PC-3 (cell line): ENCODE measurements at regions of chr12 and their contacts with region 1.

Region 1: GRCh38 chr12:6533923-6534694 is at the start of gene GAPDH:
- DNase-seq: peak; percentile 92
- ATAC-seq: peak; percentile 48
- H3K4me3 ChIP-seq: peak within 1 kb of the TSS; percentile 97
- H3K27ac ChIP-seq: peak within 1 kb of the TSS; percentile 99
- H3K4me1 ChIP-seq: peaks cover 38% of the 10 kb centered on the region
- H3K27me3 ChIP-seq: no peaks in the 10 kb centered on the region
- CTCF ChIP-seq: no peak
- total RNA-seq, gene GAPDH: 6,976 and 7,326 TPM in 2 replicates

Region 2: GRCh38 chr12:6215932-6216494 is 318.1 kb before region 1 on chr12:
- CTCF ChIA-PET with region 1: no interaction called
- POLR2A ChIA-PET with region 1: interaction called, 26 read pairs
- intact Hi-C with region 1: no loop called
- DNase-seq: peak; percentile 96
- ATAC-seq: peak; percentile 89
- H3K4me3 ChIP-seq: peak overlapping the region; percentile 30; the same call in 1 of the 2 replicates
- H3K27ac ChIP-seq: peak overlapping the region; percentile 99
- H3K4me1 ChIP-seq: peaks cover 72% of the 10 kb centered on the region
- H3K27me3 ChIP-seq: no peaks in the 10 kb centered on the region
- CTCF ChIP-seq: no peak

Region 3: DNA sequence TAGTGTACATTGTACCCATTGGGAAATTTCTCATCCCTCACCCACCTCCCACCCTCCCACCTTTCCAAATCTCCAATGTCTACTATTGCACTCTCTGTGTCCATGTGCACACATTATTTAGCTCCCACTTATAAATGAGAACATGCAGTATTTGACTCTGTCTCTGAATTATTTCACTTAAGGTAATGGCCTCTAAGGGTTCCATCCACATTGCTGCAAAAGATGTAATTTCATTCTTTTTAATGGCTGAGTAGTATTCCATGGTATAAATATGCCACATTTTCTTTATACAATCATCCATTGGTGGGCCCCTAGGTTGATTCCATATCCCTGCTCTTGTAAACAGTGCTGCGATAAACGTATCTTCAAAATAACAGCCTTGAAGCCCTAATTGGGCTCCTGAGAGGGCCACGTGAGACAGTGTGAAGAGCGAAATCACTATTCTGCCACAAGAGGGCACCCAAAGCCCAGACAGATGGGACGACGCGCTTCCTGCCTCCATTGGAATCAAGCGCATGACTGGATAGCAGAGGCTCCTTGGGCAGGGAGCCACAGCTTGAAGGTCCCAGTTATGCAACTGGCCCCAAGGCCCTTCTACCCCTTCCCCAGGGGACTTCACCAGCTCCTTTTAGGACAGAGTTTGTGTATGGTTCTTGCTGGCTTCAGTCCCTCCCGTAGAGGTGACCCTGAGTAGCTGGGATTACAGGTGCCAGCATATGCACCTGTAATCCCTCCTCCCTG is 110.7 kb before region 1 on chr12:
- CTCF ChIA-PET with region 1: no interaction called
- POLR2A ChIA-PET with region 1: no interaction called
- intact Hi-C with region 1: loop called (anchors 5 kb)
- DNase-seq: peak; percentile 84
- ATAC-seq: peak; percentile 95
- H3K4me3 ChIP-seq: no peak overlapping the region
- H3K27ac ChIP-seq: no peak overlapping the region
- H3K4me1 ChIP-seq: peaks cover 9% of the 10 kb centered on the region
- H3K27me3 ChIP-seq: no peaks in the 10 kb centered on the region
- CTCF ChIP-seq: peak; percentile 77

Region 4: DNA sequence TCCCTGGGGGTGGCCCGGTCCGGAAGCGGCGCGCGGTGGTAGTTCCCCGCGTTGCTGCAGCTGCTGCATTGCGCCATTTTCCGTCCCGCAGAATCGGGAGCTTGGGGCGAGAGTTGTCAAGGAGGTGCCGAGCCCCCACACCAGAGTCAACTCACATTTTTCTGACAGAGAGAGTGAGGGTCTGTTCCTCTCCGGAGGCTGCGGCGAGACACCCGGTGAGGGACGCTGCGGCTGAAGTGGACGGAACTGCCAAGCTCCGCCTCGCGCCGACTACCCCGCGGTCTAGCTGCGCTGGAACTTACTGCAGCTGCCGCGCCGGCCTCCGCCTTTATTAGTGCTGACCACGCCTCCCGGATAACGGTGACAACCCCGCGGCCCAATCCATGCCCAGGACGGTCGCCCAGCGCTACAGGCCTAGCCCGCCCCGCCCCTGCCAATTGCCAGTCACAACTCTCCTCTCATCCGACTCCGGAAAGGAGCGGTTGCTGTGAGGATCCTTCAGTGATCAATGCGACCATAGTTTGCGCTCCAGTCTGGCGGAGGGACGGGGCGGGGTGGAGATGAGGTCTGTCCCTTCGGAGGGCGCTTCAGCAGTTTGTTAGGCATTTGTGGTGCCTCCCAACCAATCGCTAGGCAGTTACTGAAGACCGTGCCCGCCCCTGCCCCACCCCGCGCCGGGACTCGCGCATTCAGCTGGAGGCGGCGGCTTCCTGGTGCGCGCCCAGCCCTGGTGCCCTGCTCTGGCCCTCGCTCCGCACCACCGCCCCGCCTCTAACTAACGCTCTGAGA is 63.5 kb before region 1 on chr12 and contains the start of gene VAMP1:
- CTCF ChIA-PET with region 1: interaction called, 4 read pairs
- POLR2A ChIA-PET with region 1: interaction called, 28 read pairs
- intact Hi-C with region 1: loop called (anchors 1 kb)
- DNase-seq: peak; percentile 87
- ATAC-seq: peak; percentile 92
- H3K4me3 ChIP-seq: peak within 1 kb of the TSS; percentile 96
- H3K27ac ChIP-seq: peak within 1 kb of the TSS; percentile 41
- H3K4me1 ChIP-seq: peaks cover 25% of the 10 kb centered on the region
- H3K27me3 ChIP-seq: no peaks in the 10 kb centered on the region
- CTCF ChIP-seq: no peak
- total RNA-seq, gene VAMP1: 9.3 and 13.9 TPM in 2 replicates

Region 5: GRCh38 chr12:6493497-6494257 is 40.4 kb before region 1 on chr12 and contains the start of gene NCAPD2:
- CTCF ChIA-PET with region 1: no interaction called
- POLR2A ChIA-PET with region 1: interaction called, 6 read pairs
- intact Hi-C with region 1: loop called (anchors 2 kb)
- DNase-seq: peak; percentile 94
- ATAC-seq: peak; percentile 93
- H3K4me3 ChIP-seq: peak within 1 kb of the TSS; percentile 80
- H3K27ac ChIP-seq: peak within 1 kb of the TSS; percentile 91
- H3K4me1 ChIP-seq: peaks cover 19% of the 10 kb centered on the region
- H3K27me3 ChIP-seq: no peaks in the 10 kb centered on the region
- CTCF ChIP-seq: no peak
- total RNA-seq, gene NCAPD2: 105 TPM in 2 replicates

Region 6: GRCh38 chr12:6554168-6555017 is 20.3 kb after region 1 on chr12:
- CTCF ChIA-PET with region 1: interaction called, 8 read pairs
- POLR2A ChIA-PET with region 1: interaction called, 36 read pairs
- intact Hi-C with region 1: no loop called
- DNase-seq: peak; percentile 57
- ATAC-seq: peak; percentile 46
- H3K4me3 ChIP-seq: no peak overlapping the region
- H3K27ac ChIP-seq: no peak overlapping the region
- H3K4me1 ChIP-seq: peaks cover under 1% of the 10 kb centered on the region; the same call in 1 of the 2 replicates
- H3K27me3 ChIP-seq: no peaks in the 10 kb centered on the region
- CTCF ChIP-seq: peak; percentile 55

Region 7: GRCh38 chr12:6873094-6874014 is 339.2 kb after region 1 on chr12 and contains the start of gene SPSB2:
- CTCF ChIA-PET with region 1: no interaction called
- POLR2A ChIA-PET with region 1: interaction called, 22 read pairs
- intact Hi-C with region 1: no loop called
- DNase-seq: peak; percentile 94
- ATAC-seq: peak; percentile 68
- H3K4me3 ChIP-seq: peak within 1 kb of the TSS; percentile 78
- H3K27ac ChIP-seq: peak within 1 kb of the TSS; percentile 28; the same call in 1 of the 2 replicates
- H3K4me1 ChIP-seq: peaks cover 31% of the 10 kb centered on the region
- H3K27me3 ChIP-seq: no peaks in the 10 kb centered on the region
- CTCF ChIP-seq: no peak
- total RNA-seq, gene SPSB2: 8.4 and 9.2 TPM in 2 replicates